ENCODE measurements at regions of chr20 and their contacts with region 1.

Region 1: DNA sequence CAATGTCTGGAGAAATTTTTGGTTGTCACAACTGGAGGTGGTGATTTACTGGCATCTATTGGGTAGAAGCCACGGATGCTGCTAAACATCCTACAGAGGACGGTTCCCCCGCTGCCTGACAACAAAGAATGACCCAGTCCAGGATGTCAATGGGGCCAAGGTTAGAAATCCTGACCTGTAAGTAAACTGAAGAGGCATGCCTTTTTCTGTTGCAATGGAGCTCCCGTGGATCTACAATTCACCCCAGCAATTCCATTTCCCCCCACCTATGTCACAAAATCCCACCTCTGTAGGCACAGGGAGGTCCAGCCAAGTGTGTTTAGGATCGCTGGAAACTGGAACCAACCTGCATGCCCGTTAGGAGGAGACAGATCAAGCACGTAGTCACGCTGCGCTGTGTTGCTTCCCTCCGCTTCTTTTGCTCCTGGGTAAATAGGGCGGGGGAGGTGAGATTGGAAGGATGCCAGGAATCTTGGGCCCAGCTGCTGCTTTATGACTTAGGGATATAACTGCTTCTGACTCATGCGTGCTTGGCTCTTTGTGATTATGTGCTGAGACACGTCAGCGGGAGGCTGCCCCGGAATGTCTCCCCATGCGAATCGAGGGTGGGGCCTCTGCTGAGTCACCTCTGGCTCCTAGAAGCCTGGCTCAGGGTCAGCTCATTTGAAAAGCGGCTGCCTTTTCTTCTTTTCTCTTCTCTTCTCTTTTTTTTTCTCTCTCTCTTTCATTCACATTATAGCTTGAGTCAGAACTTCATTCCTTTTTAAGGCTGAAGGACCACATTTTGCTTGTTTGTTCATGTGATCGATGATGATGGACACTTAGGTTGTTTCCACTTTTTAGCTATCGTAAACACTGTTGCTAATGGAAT is 12.4 kb upstream of the PEDS1 start:
- DNase-seq: peak; percentile 99
- H3K4me3 ChIP-seq: peak overlapping the region; percentile 67
- CTCF ChIP-seq: no peak

Region 2: DNA sequence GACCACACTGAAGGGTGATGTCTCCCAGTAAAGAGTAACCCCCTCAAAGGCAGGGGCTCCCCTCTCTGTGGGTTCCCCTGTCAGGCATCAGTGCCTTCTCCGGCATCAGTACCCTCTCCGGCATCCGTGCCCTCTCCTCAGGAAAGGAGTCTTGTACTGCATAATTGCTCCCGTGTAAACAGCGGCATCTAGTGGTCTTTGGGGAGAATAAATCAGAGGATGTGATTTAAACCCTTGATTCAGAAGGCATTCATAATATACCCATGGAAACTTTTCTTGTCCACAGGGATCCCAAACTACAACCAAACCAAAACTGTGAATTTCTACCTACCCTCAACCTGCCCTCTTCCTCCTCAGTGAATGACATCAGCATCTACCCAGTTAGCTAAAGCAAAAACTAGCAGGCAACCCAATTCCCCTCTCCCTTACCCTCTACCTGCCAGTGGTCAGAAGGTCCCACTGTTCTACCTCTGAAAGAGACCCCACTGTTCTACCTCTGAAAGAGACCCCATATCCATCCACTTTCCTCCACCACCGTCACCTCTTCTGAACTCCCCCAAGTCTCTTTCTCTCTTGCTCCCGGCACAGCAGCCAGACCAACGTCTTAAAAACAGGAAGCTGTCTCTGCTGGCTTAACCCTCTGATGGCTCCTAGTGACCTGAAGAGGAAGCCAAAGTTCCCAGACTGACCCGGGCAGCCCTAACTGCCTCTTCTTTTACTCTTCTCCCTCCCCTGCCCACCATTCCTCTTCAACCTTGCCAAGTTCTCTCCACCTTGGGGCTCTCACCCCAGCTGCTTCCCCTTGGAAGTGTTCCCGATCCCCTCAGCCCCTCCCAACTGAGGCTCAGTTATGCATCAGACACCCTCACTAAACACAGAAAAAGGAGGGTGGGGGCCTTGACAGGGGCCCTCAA is 80.2 kb before region 1 on chr20:
- CTCF ChIA-PET with region 1: interaction called, 57 read pairs
- POLR2A ChIA-PET with region 1: no interaction called
- DNase-seq: no peak
- H3K4me3 ChIP-seq: no peak overlapping the region
- CTCF ChIP-seq: peak; percentile 65

Region 3: GRCh38 chr20:50115591-50116372 is 50.1 kb before region 1 on chr20:
- CTCF ChIA-PET with region 1: interaction called, 156 read pairs
- POLR2A ChIA-PET with region 1: interaction called, 3 read pairs
- DNase-seq: peak; percentile 78
- H3K4me3 ChIP-seq: peak overlapping the region; percentile 55
- CTCF ChIP-seq: no peak

Region 4: GRCh38 chr20:50126691-50127116 is 39.2 kb before region 1 on chr20:
- CTCF ChIA-PET with region 1: interaction called, 156 read pairs
- POLR2A ChIA-PET with region 1: no interaction called
- DNase-seq: no peak
- H3K4me3 ChIP-seq: no peak overlapping the region
- CTCF ChIP-seq: no peak

Region 5: DNA sequence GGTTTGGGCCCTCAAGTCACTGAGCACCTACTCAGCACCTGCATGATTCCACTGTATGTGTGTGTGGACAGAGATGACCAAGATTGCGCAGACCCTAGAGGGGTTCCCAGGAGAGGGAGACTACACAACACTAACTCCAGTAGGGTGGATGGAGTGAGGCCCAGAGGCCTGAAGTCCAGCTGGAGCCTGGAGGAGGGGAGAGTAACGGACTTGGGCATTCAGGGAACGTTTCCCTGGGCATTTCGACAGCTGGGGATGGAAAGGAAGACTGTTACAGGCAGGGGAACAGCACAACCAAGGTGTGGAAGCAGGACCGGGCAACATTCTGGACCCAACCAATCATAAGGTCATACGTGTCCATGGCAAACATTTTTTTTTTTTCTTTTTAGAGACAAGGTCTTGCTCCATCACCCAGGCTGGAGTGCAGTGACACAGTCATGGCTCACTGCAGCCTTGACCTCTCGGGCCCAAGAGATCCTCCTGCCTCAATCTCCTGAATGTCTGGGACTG is 13.6 kb after region 1 on chr20:
- CTCF ChIA-PET with region 1: interaction called, 61 read pairs
- POLR2A ChIA-PET with region 1: no interaction called
- DNase-seq: no peak
- H3K4me3 ChIP-seq: no peak overlapping the region
- CTCF ChIP-seq: no peak

Region 6: GRCh38 chr20:50460460-50461267 is 294.7 kb after region 1 on chr20:
- CTCF ChIA-PET with region 1: interaction called, 18 read pairs
- POLR2A ChIA-PET with region 1: no interaction called
- DNase-seq: no peak
- H3K4me3 ChIP-seq: no peak overlapping the region
- CTCF ChIP-seq: peak; percentile 90

Measured in AG04449 (cell line).